ENCODE measurements at regions of chr2 and their contacts with region 1.

Region 1: DNA sequence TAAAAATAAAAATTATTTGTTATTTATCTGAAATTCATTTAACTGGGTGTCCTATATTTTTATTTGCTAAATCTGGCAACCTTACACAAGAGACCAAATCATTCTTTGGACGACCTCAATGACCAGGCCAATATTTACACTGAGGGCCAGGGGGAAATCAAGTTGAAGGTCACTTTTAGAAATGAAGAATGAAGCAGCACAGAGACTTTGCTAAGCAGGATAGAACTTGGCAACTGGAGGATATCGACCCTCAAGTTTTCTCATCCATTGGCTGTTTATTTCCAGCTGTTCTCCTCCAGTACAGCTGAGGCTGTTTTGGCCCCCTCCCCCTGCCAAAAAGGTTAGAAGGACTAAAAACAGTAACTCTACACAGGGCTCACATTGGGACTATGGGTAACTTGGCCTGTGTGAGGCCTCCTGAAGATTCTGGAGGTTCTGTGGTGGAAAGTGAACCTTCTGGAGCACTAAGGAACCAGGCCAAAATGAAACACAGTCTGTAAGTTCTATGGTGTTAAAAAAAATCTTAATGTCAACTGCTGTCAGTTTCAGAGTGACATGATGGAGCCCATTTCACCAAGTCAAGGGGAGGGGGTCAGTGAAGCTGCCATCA is 32.2 kb upstream of the ZFP36L2 start:
- DNase-seq: no peak

Region 2: GRCh38 chr2:43280994-43281393 is 22.3 kb after region 1 on chr2:
- intact Hi-C with region 1: loop called in 1 of 2 experiments (anchors 1 kb)
- DNase-seq: no peak

Region 3: GRCh38 chr2:43312755-43313641 is 54.3 kb after region 1 on chr2:
- intact Hi-C with region 1: no loop called
- DNase-seq: no peak

Measured in posterior vena cava (tissue), 2 donors.